CD4-positive, alpha-beta memory T cell (primary cell): ENCODE measurements at regions of chr12 and their contacts with region 1.

Region 1: DNA sequence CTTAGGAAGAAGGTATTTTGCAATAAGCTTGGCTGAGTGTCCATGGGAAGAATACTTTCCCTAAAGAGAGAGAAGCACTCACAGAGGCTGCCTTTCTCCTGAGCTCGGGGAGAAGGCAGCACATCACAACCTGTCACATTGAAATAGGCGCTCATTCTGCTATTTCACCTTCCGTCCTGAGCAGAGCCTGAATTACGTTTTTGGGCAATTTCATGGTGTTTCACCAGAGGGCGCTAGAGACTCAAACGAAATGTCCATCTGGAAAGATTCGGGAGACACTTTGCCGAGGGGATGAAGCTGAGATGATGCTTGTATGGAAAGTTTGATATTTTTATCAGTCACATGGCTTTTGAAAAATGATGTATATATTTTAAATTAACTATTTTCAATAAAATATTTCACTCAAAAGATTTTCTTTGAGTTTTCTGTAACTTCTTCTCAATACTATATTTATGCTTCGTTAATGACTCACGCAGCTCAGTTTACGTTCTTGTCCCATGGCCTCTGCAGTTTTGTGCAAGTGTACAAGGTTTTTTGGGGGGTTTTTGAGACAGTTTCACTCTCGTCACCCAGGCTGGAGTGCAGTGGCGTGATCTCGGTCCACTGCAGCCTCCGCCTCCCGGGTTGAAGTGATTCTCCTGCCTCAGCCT is 17.4 kb upstream of the B4GALNT3 start:
- DNase-seq: peak in 4 of 5 donors; percentile 31 to 48 (median 42)
- H3K4me3 ChIP-seq: no peak overlapping the region
- H3K4me3 Mint-ChIP-seq: no peak overlapping the region
- H3K27ac ChIP-seq: no peak overlapping the region
- H3K27ac Mint-ChIP-seq: no peak overlapping the region
- H3K4me1 ChIP-seq: no peaks in the 10 kb centered on the region
- H3K4me1 Mint-ChIP-seq: peaks cover 0 to 2% (median under 1%) of the 10 kb centered on the region in 4 donors
- H3K27me3 ChIP-seq: no peaks in the 10 kb centered on the region
- H3K27me3 Mint-ChIP-seq: peaks cover 2 to 3% of the 10 kb centered on the region in 2 donors

Region 2: GRCh38 chr12:422526-422925 is 19.8 kb before region 1 on chr12:
- CTCF ChIA-PET with region 1: interaction called, 39 read pairs
- POLR2A ChIA-PET with region 1: no interaction called
- intact Hi-C with region 1: no loop called
- DNase-seq: no peak
- H3K4me3 ChIP-seq: no peak overlapping the region
- H3K4me3 Mint-ChIP-seq: no peak overlapping the region
- H3K27ac ChIP-seq: no peak overlapping the region
- H3K27ac Mint-ChIP-seq: peak overlapping the region in 1 of 7 donors; percentile 38
- H3K4me1 ChIP-seq: no peaks in the 10 kb centered on the region
- H3K4me1 Mint-ChIP-seq: no peaks in the 10 kb centered on the region
- H3K27me3 ChIP-seq: no peaks in the 10 kb centered on the region
- H3K27me3 Mint-ChIP-seq: no peaks in the 10 kb centered on the region

Region 3: GRCh38 chr12:464484-465267 is 22.3 kb after region 1 on chr12:
- CTCF ChIA-PET with region 1: no interaction called
- POLR2A ChIA-PET with region 1: no interaction called
- intact Hi-C with region 1: no loop called
- DNase-seq: no peak
- H3K4me3 ChIP-seq: no peak overlapping the region
- H3K4me3 Mint-ChIP-seq: no peak overlapping the region
- H3K27ac ChIP-seq: no peak overlapping the region
- H3K27ac Mint-ChIP-seq: peak overlapping the region in 2 of 7 donors; percentile 55 to 87
- H3K4me1 ChIP-seq: no peaks in the 10 kb centered on the region
- H3K4me1 Mint-ChIP-seq: peaks cover 10 to 25% (median 16%) of the 10 kb centered on the region in 4 donors
- H3K27me3 ChIP-seq: no peaks in the 10 kb centered on the region
- H3K27me3 Mint-ChIP-seq: peaks cover 0 to 3% of the 10 kb centered on the region in 2 donors

Region 4: GRCh38 chr12:510071-510825 is 67.9 kb after region 1 on chr12:
- CTCF ChIA-PET with region 1: no interaction called
- POLR2A ChIA-PET with region 1: no interaction called
- intact Hi-C with region 1: no loop called
- DNase-seq: no peak
- H3K4me3 ChIP-seq: no peak overlapping the region
- H3K4me3 Mint-ChIP-seq: no peak overlapping the region
- H3K27ac ChIP-seq: no peak overlapping the region
- H3K27ac Mint-ChIP-seq: no peak overlapping the region
- H3K4me1 ChIP-seq: no peaks in the 10 kb centered on the region
- H3K4me1 Mint-ChIP-seq: peaks cover 0 to 4% (median 0%) of the 10 kb centered on the region in 4 donors
- H3K27me3 ChIP-seq: no peaks in the 10 kb centered on the region
- H3K27me3 Mint-ChIP-seq: peaks cover 0 to 4% of the 10 kb centered on the region in 2 donors

Region 5: GRCh38 chr12:538731-539539 is 96.6 kb after region 1 on chr12:
- CTCF ChIA-PET with region 1: interaction called, 21 read pairs
- POLR2A ChIA-PET with region 1: no interaction called
- intact Hi-C with region 1: no loop called
- DNase-seq: peak; percentile 80 to 87 (median 84)
- H3K4me3 ChIP-seq: no peak overlapping the region
- H3K4me3 Mint-ChIP-seq: peak overlapping the region in 7 of 8 donors; percentile 0 to 78 (median 61)
- H3K27ac ChIP-seq: no peak overlapping the region
- H3K27ac Mint-ChIP-seq: peak overlapping the region; percentile 84 to 93 (median 88)
- H3K4me1 ChIP-seq: peaks cover 25% of the 10 kb centered on the region
- H3K4me1 Mint-ChIP-seq: peaks cover 14 to 22% (median 19%) of the 10 kb centered on the region in 4 donors
- H3K27me3 ChIP-seq: no peaks in the 10 kb centered on the region
- H3K27me3 Mint-ChIP-seq: no peaks in the 10 kb centered on the region